Pancreas (tissue), 10 donors: ENCODE measurements at regions of chr6 and their contacts with region 1.

Region 1: GRCh38 chr6:12233693-12234571 is 56.2 kb upstream of the EDN1 start:
- DNase-seq: peak in 3 of 6 donors; percentile 27 to 63 (median 38)
- ATAC-seq: peak; percentile 86 to 98 (median 96)
- H3K4me3 ChIP-seq: no peak overlapping the region
- H3K27ac ChIP-seq: no peak overlapping the region
- H3K4me1 ChIP-seq: peaks cover 0 to 4% (median 0%) of the 10 kb centered on the region in 3 donors
- H3K27me3 ChIP-seq: no peaks in the 10 kb centered on the region
- CTCF ChIP-seq: peak; percentile 6 to 70 (median 58)

Region 2: DNA sequence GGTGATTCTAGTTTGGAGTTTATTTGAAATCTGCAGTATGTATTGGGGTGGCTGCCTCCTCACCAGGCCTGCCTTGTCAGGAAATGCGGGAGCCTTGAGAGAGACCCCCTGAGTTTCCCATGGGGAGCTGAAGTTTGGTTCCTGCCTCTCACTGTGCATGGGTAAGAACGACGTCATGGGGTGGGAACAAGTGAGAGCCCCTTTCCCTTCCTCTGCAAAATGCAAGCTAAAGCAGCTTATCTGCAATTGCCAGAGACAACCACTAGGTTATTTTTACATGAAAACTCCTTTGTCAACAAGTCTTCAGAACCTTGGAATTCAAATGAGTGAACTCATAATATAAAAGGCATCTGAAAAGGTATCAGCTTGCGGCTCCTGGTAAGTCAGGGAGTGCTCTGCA is 638.0 kb before region 1 on chr6:
- intact Hi-C with region 1: loop called in 1 of 3 experiments (anchors 10 kb)
- DNase-seq: no peak
- ATAC-seq: no peak
- H3K4me3 ChIP-seq: no peak overlapping the region
- H3K27ac ChIP-seq: no peak overlapping the region
- H3K4me1 ChIP-seq: no peaks in the 10 kb centered on the region
- H3K27me3 ChIP-seq: no peaks in the 10 kb centered on the region
- CTCF ChIP-seq: no peak

Region 3: GRCh38 chr6:11653028-11653583 is 580.8 kb before region 1 on chr6:
- intact Hi-C with region 1: loop called in 2 of 3 experiments (anchors 10 kb)
- DNase-seq: no peak
- ATAC-seq: peak in 2 of 4 donors; percentile 46 to 63
- H3K4me3 ChIP-seq: no peak overlapping the region
- H3K27ac ChIP-seq: no peak overlapping the region
- H3K4me1 ChIP-seq: no peaks in the 10 kb centered on the region
- H3K27me3 ChIP-seq: no peaks in the 10 kb centered on the region
- CTCF ChIP-seq: no peak